CD4-positive, alpha-beta T cell (primary cell): ENCODE measurements at regions of chr7 and their contacts with region 1.

Region 1: DNA sequence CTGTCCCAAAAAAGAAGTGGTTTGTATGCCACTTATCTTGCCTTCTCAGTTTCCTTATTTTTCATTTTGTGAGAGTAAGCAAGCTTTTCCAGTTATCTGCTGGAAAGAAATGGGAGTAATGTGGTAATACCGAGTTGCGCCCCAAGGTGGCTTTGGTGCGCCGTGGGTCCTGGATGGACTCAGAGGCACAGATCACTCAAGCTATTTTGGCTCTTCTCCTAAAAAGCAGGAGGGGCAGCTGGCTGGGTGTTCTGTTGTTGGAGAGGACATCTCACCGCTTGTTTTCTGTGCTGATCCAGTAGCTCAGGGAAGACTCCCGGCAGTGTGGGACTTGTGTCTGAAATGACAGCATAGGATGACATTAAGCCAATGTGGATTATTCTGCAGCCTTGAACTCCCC is 16.4 kb downstream of the PRKRIP1 start:
- DNase-seq: peak; percentile 29 to 75 (median 48)
- ATAC-seq: peak; percentile 48
- H3K4me3 ChIP-seq: no peak overlapping the region
- H3K4me3 Mint-ChIP-seq: no peak overlapping the region
- H3K27ac ChIP-seq: no peak overlapping the region
- H3K27ac Mint-ChIP-seq: peak overlapping the region; percentile 39
- H3K4me1 ChIP-seq: peaks cover 39% of the 10 kb centered on the region
- H3K4me1 Mint-ChIP-seq: peaks cover 36% of the 10 kb centered on the region
- H3K27me3 ChIP-seq: no peaks in the 10 kb centered on the region
- H3K27me3 Mint-ChIP-seq: no peaks in the 10 kb centered on the region
- CTCF ChIP-seq: peak; percentile 67

Region 2: GRCh38 chr7:102321351-102322177 is 91.0 kb before region 1 on chr7:
- CTCF ChIA-PET with region 1: no interaction called
- POLR2A ChIA-PET with region 1: no interaction called
- intact Hi-C with region 1: no loop called
- DNase-seq: peak in 2 of 14 experiments; percentile 11 to 14
- ATAC-seq: peak; percentile 54
- H3K4me3 ChIP-seq: no peak overlapping the region
- H3K4me3 Mint-ChIP-seq: no peak overlapping the region
- H3K27ac ChIP-seq: no peak overlapping the region
- H3K27ac Mint-ChIP-seq: no peak overlapping the region
- H3K4me1 ChIP-seq: no peaks in the 10 kb centered on the region
- H3K4me1 Mint-ChIP-seq: no peaks in the 10 kb centered on the region
- H3K27me3 ChIP-seq: peaks cover 4 to 6% of the 10 kb centered on the region in 2 experiments
- H3K27me3 Mint-ChIP-seq: peaks cover 26% of the 10 kb centered on the region
- CTCF ChIP-seq: no peak

Region 3: DNA sequence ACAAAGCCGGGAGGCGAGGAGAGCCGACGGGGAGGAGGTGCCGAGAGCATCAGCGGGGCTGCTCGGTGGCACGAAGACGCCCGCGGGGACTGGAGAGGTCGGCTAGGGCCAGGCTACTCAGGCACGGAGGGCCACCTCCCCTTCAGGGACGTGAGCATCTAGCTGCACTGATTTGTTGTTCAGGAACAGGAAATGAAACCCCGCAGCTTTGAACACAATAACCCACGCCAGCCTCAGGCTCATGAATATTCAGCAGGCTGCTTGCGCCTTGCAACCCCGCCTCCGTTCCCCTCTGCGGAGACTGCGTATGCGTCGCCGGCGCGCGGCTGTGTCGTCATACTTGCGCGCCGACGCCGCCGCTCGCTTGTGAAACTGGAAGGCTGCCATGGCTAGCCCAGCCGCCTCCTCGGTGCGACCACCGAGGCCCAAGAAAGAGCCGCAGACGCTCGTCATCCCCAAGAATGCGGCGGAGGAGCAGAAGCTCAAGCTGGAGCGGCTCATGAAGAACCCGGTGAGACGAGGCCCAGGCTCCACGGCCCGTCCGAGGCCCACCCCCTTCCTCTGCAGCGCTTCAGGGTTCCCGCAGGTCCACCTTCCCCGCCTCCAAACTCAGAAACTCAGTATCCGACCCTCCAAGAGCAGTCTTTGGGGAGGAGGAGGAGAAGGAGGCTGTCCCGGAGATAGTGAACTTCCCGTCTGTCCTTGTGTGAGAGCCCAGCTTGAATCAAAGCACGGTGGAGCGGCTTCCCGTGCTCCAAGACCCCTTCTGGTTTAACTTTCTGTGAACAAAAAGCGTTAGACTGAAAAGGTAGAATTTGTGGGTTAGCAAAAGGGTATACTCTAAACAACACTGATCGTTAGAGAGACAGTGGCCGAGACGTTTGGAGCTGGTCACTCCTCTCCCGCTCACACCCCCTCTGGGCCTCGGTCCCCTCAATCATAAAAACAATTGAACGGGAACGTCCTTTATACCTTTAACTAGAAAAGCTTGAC is 16.2 kb before region 1 on chr7 and contains the start of gene PRKRIP1:
- CTCF ChIA-PET with region 1: interaction called, 3 read pairs
- POLR2A ChIA-PET with region 1: interaction called, 24 read pairs
- intact Hi-C with region 1: no loop called
- DNase-seq: peak; percentile 70 to 97 (median 80)
- ATAC-seq: peak; percentile 97
- H3K4me3 ChIP-seq: peak within 1 kb of the TSS; percentile 79
- H3K4me3 Mint-ChIP-seq: peak within 1 kb of the TSS; percentile 95
- H3K27ac ChIP-seq: peak within 1 kb of the TSS; percentile 79 to 91
- H3K27ac Mint-ChIP-seq: peak within 1 kb of the TSS; percentile 98
- H3K4me1 ChIP-seq: peaks cover 25% of the 10 kb centered on the region
- H3K4me1 Mint-ChIP-seq: peaks cover 20% of the 10 kb centered on the region
- H3K27me3 ChIP-seq: no peaks in the 10 kb centered on the region
- H3K27me3 Mint-ChIP-seq: no peaks in the 10 kb centered on the region
- CTCF ChIP-seq: no peak
- total RNA-seq, gene PRKRIP1: 47.4 to 48.0 TPM

Region 4: DNA sequence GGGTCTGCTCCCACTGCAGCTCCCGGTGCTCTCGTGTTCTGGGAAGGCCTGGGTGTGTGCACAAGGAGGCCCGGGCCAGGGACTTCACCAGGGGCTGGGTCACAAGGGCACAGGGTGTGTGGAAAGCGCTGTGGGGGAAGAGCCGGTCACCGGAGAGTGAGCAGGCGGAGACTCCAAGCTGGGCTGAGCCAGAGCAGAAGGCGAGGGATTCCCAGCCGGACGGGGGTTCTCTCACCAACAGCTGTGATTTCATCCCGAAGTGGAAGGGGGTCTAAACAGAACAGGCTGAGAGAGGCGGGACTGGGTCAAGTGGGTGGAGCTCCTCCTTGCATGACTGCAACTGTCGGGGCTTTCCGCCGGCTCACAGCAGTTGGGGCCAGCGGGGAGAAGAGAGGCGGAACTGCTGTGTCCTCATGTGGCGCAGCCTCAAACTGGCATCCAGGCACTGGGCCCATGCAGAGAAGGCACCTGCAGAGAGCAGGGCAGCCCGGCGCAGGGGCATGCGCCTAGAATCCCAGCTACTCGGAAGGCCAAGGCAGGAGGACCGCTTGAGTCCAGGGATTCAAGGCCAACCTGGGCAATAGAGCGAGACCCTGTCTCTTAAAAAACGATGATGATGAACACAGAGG is 13.2 kb after region 1 on chr7:
- CTCF ChIA-PET with region 1: interaction called, 17 read pairs
- POLR2A ChIA-PET with region 1: interaction called, 111 read pairs
- intact Hi-C with region 1: loop called in 1 of 2 experiments (anchors 1 kb)
- DNase-seq: peak; percentile 74 to 96 (median 78)
- ATAC-seq: peak; percentile 75
- H3K4me3 ChIP-seq: peak overlapping the region; percentile 42
- H3K4me3 Mint-ChIP-seq: peak overlapping the region; percentile 86
- H3K27ac ChIP-seq: peak overlapping the region; percentile 95 to 99
- H3K27ac Mint-ChIP-seq: peak overlapping the region; percentile 100
- H3K4me1 ChIP-seq: peaks cover 82% of the 10 kb centered on the region
- H3K4me1 Mint-ChIP-seq: peaks cover 63% of the 10 kb centered on the region
- H3K27me3 ChIP-seq: no peaks in the 10 kb centered on the region
- H3K27me3 Mint-ChIP-seq: no peaks in the 10 kb centered on the region
- CTCF ChIP-seq: no peak

Region 5: GRCh38 chr7:102433219-102434038 is 20.9 kb after region 1 on chr7 and contains the start of gene ORAI2:
- CTCF ChIA-PET with region 1: interaction called, 12 read pairs
- POLR2A ChIA-PET with region 1: interaction called, 61 read pairs
- intact Hi-C with region 1: loop called in 1 of 2 experiments (anchors 2 kb)
- DNase-seq: peak; percentile 71 to 93 (median 87)
- ATAC-seq: peak; percentile 56
- H3K4me3 ChIP-seq: peak within 1 kb of the TSS; percentile 79
- H3K4me3 Mint-ChIP-seq: peak within 1 kb of the TSS; percentile 94
- H3K27ac ChIP-seq: peak within 1 kb of the TSS; percentile 92 to 95
- H3K27ac Mint-ChIP-seq: peak within 1 kb of the TSS; percentile 100
- H3K4me1 ChIP-seq: peaks cover 68% of the 10 kb centered on the region
- H3K4me1 Mint-ChIP-seq: peaks cover 47% of the 10 kb centered on the region
- H3K27me3 ChIP-seq: no peaks in the 10 kb centered on the region
- H3K27me3 Mint-ChIP-seq: no peaks in the 10 kb centered on the region
- CTCF ChIP-seq: no peak
- total RNA-seq, gene ORAI2: 12.3 to 16.5 TPM

Region 6: DNA sequence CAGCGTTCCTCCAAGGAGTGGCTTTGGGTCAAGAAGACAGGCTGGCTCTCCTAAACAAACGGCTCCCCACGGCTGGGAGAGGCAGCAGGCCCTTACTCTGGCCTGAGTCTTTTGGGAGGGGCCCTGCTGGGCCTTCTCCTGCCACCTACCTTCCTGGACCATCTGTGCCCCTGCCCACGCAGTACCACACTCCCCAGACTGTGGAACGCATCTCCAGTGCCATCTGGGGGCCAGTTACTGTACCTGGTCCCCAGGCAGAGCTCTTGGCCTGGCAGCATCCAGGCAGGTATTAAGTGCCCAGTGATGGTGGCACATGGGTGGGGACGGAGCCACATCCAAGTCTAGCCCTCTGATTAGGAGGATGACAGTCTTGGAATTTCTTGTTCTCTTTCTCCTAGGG is 37.7 kb after region 1 on chr7:
- CTCF ChIA-PET with region 1: interaction called, 43 read pairs
- POLR2A ChIA-PET with region 1: interaction called, 14 read pairs
- intact Hi-C with region 1: loop called (anchors 1 to 2 kb)
- DNase-seq: peak; percentile 44 to 79 (median 56)
- ATAC-seq: peak; percentile 95
- H3K4me3 ChIP-seq: no peak overlapping the region
- H3K4me3 Mint-ChIP-seq: no peak overlapping the region
- H3K27ac ChIP-seq: no peak overlapping the region
- H3K27ac Mint-ChIP-seq: no peak overlapping the region
- H3K4me1 ChIP-seq: peaks cover 5% of the 10 kb centered on the region
- H3K4me1 Mint-ChIP-seq: peaks cover 4% of the 10 kb centered on the region
- H3K27me3 ChIP-seq: no peaks in the 10 kb centered on the region
- H3K27me3 Mint-ChIP-seq: no peaks in the 10 kb centered on the region
- CTCF ChIP-seq: peak; percentile 66

Region 7: DNA sequence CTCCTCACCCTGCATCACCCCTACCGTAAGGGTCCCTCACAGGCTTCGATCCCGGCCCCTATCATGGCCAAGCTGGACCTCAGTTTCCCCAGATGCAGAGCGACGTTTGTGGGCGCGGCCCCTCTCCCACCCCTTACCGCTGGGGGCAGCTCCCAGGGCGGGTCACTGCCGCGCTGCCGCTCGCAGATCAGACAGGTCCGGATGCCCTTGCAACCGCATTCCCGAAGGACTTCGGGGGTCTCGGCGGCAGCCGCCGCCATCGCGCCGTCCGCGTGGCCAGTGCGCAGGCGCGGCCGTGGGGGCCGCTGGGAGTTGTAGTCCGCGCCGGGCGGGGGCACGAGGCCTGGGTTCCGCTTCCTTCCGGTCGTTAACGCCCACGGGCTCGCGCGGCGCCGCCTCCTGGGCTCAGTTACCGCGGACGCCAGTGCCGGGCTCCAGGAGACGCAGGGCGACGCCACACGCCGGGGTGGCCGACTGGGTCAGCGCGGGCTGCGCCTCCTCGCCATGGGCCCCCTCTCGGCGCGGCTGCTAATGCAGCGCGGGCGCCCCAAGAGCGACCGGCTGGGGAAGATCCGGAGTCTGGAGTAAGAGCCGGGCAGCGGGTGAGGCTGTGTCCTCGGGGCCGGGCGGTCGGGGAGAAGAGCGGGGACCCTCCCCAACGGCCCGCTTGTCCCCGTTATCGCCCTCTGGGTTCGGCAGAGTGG is 52.2 kb after region 1 on chr7 and contains the starts of genes ALKBH4 and LRWD1:
- CTCF ChIA-PET with region 1: interaction called, 13 read pairs
- POLR2A ChIA-PET with region 1: interaction called, 4 read pairs
- intact Hi-C with region 1: no loop called
- DNase-seq: peak; percentile 85 to 97 (median 94)
- ATAC-seq: peak; percentile 93
- H3K4me3 ChIP-seq: peak within 1 kb of the TSS; percentile 99
- H3K4me3 Mint-ChIP-seq: peak within 1 kb of the TSS; percentile 92
- H3K27ac ChIP-seq: peak within 1 kb of the TSS; percentile 40 to 46
- H3K27ac Mint-ChIP-seq: peak within 1 kb of the TSS; percentile 75
- H3K4me1 ChIP-seq: peaks cover 52% of the 10 kb centered on the region
- H3K4me1 Mint-ChIP-seq: peaks cover 34% of the 10 kb centered on the region
- H3K27me3 ChIP-seq: no peaks in the 10 kb centered on the region
- H3K27me3 Mint-ChIP-seq: no peaks in the 10 kb centered on the region
- CTCF ChIP-seq: peak; percentile 29
- total RNA-seq, gene ALKBH4: 2.9 to 3.5 TPM
- total RNA-seq, gene LRWD1: 12.9 to 13.9 TPM